ENCODE measurements at regions of chr3 and their contacts with region 1.

Region 1: DNA sequence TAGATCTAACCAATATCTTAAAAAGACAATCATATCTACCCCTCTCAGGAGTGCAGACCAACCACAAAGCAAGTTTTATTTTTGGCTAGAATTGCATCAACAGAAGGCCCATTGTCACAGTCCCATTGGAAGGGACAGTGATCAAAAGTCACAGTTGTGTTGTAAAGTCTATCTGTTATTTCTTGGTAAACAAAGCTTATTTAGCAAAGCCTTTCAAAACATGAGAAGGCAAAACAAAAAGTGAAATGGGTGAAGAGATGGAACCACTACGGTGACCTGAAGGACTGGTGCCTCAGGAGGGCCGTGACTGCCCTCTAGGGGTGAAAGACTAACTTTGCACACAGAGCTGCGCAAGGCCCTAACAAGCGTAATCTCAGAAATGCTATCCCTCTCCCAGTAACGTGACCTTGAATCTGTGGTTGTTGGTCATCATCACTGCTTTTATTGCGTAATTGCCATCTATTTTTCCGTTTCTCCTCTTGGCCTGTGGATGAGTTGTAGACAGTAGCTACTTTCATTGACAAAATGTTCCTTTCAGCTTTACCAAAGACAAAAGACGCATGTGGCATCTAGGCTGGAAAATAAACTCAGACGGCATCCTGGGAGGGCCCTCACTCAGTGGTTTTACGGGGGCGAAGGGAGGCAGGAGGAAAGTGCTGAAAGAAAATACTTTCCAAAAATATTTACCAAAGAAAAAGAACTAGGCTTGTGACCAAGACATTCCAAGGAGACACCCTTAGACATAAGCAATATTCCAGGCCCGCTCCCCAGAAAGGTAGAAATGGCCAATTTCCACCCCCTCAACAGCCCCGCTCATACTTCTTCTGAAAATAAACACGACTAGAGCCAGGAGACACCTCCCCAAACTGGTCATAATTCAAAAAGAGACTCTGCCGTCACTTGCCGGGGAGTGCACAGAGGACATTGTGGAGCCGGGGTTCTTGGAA is 79.4 kb downstream of the FRMD4B start:
- DNase-seq: peak; percentile 92
- H3K4me3 Mint-ChIP-seq: no peak overlapping the region
- H3K27ac Mint-ChIP-seq: peak overlapping the region; percentile 59
- H3K4me1 Mint-ChIP-seq: peaks cover 16% of the 10 kb centered on the region
- H3K27me3 Mint-ChIP-seq: no peaks in the 10 kb centered on the region
- CTCF ChIP-seq: peak; percentile 85

Region 2: GRCh38 chr3:68706096-68706495 is 600.4 kb before region 1 on chr3:
- CTCF ChIA-PET with region 1: no interaction called
- POLR2A ChIA-PET with region 1: no interaction called
- intact Hi-C with region 1: no loop called
- DNase-seq: no peak
- H3K4me3 Mint-ChIP-seq: no peak overlapping the region
- H3K27ac Mint-ChIP-seq: no peak overlapping the region
- H3K4me1 Mint-ChIP-seq: no peaks in the 10 kb centered on the region
- H3K27me3 Mint-ChIP-seq: no peaks in the 10 kb centered on the region
- CTCF ChIP-seq: no peak

Region 3: GRCh38 chr3:69120879-69121464 is 185.5 kb before region 1 on chr3:
- CTCF ChIA-PET with region 1: interaction called, 66 read pairs
- POLR2A ChIA-PET with region 1: no interaction called
- intact Hi-C with region 1: loop called (anchors 1 kb)
- DNase-seq: peak; percentile 87
- H3K4me3 Mint-ChIP-seq: no peak overlapping the region
- H3K27ac Mint-ChIP-seq: no peak overlapping the region
- H3K4me1 Mint-ChIP-seq: no peaks in the 10 kb centered on the region
- H3K27me3 Mint-ChIP-seq: no peaks in the 10 kb centered on the region
- CTCF ChIP-seq: peak; percentile 88

Region 4: GRCh38 chr3:69181592-69182211 is 124.8 kb before region 1 on chr3:
- CTCF ChIA-PET with region 1: interaction called, 12 read pairs
- POLR2A ChIA-PET with region 1: no interaction called
- intact Hi-C with region 1: no loop called
- DNase-seq: peak; percentile 38
- H3K4me3 Mint-ChIP-seq: no peak overlapping the region
- H3K27ac Mint-ChIP-seq: peak overlapping the region; percentile 46
- H3K4me1 Mint-ChIP-seq: peaks cover 24% of the 10 kb centered on the region
- H3K27me3 Mint-ChIP-seq: no peaks in the 10 kb centered on the region
- CTCF ChIP-seq: no peak

Region 5: GRCh38 chr3:69200384-69201068 is 106.0 kb before region 1 on chr3:
- CTCF ChIA-PET with region 1: interaction called, 25 read pairs
- POLR2A ChIA-PET with region 1: interaction called, 4 read pairs
- intact Hi-C with region 1: loop called (anchors 1 kb)
- DNase-seq: peak; percentile 92
- H3K4me3 Mint-ChIP-seq: peak overlapping the region; percentile 75
- H3K27ac Mint-ChIP-seq: peak overlapping the region; percentile 93
- H3K4me1 Mint-ChIP-seq: peaks cover 24% of the 10 kb centered on the region
- H3K27me3 Mint-ChIP-seq: no peaks in the 10 kb centered on the region
- CTCF ChIP-seq: no peak

Region 6: GRCh38 chr3:69324362-69325025 is 18.0 kb after region 1 on chr3:
- CTCF ChIA-PET with region 1: interaction called, 44 read pairs
- POLR2A ChIA-PET with region 1: interaction called, 4 read pairs
- intact Hi-C with region 1: no loop called
- DNase-seq: peak; percentile 51
- H3K4me3 Mint-ChIP-seq: no peak overlapping the region
- H3K27ac Mint-ChIP-seq: no peak overlapping the region
- H3K4me1 Mint-ChIP-seq: peaks cover 11% of the 10 kb centered on the region
- H3K27me3 Mint-ChIP-seq: no peaks in the 10 kb centered on the region
- CTCF ChIP-seq: peak; percentile 53

Region 7: DNA sequence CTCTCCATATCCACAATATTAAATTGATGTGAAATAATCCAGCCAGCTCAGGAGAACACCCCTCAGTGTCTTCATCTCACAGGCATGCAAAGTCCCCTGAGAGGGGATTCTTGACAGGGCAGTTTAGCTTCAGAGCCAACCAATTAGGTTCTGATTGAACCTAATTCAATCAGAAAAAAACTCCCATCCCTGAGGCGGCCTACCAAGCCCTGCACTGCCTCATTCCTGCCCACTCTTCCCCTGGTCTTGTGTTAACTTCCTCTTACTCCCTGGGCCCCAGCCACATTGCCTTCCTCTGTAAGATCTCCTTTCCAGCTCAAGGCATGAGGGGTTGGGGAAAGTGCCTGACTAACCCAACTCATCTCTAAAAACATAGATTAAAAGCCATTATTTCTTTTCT is 33.2 kb after region 1 on chr3:
- CTCF ChIA-PET with region 1: no interaction called
- POLR2A ChIA-PET with region 1: no interaction called
- intact Hi-C with region 1: no loop called
- DNase-seq: no peak
- H3K4me3 Mint-ChIP-seq: no peak overlapping the region
- H3K27ac Mint-ChIP-seq: no peak overlapping the region
- H3K4me1 Mint-ChIP-seq: peaks cover 6% of the 10 kb centered on the region
- H3K27me3 Mint-ChIP-seq: no peaks in the 10 kb centered on the region
- CTCF ChIP-seq: no peak

Region 8: DNA sequence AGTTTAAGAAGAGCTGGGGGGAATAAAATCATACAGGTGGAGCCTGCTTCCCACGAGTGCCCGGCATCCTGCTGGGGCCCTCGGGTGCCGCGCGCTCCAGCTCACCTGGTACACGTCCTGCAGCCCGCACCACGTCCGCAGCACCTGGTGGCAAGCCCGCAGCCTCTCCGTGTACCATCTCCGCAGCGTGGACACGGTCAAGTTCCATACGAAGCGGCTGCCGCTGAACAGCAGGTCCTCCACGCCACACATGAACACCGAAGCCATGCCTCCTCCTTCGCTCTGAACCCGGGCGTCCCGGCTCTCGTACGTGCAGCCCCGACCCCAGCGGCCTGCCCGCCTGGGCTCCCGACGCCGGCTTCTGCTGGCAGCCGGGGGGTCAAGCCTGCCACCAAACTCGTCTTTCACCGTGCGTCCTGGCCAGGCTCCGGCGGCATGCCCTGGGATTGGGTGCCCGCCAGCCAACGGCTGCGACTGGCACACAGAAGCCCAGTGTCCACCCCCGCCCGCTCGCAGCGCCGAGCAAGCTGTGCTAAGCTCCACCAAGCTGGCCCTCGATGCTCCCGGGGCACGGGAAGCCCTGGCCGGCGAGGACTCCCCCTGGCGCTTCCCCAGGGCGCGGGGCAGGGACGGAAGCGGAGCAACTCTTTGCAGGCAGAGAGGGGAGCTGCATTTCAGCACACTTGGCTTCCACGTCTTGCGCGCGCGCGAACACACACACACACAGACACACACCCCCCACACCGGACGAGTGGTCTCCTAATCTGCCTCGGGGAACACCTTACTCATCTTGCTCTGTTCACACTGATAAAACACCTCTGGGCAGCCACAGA is 79.4 kb after region 1 on chr3 and contains the start of gene FRMD4B:
- CTCF ChIA-PET with region 1: interaction called, 11 read pairs
- POLR2A ChIA-PET with region 1: interaction called, 4 read pairs
- intact Hi-C with region 1: no loop called
- DNase-seq: peak; percentile 66
- H3K4me3 Mint-ChIP-seq: peak within 1 kb of the TSS; percentile 80
- H3K27ac Mint-ChIP-seq: peak within 1 kb of the TSS; percentile 75
- H3K4me1 Mint-ChIP-seq: peaks cover 23% of the 10 kb centered on the region
- H3K27me3 Mint-ChIP-seq: no peaks in the 10 kb centered on the region
- CTCF ChIP-seq: peak; percentile 33
- total RNA-seq, gene FRMD4B: 39.0 and 51.9 TPM in 2 replicates

Region 9: GRCh38 chr3:69425261-69425660 is 118.7 kb after region 1 on chr3:
- CTCF ChIA-PET with region 1: interaction called, 19 read pairs
- POLR2A ChIA-PET with region 1: no interaction called
- intact Hi-C with region 1: loop called (anchors 1 kb)
- DNase-seq: peak; percentile 62
- H3K4me3 Mint-ChIP-seq: no peak overlapping the region
- H3K27ac Mint-ChIP-seq: no peak overlapping the region
- H3K4me1 Mint-ChIP-seq: peaks cover 18% of the 10 kb centered on the region
- H3K27me3 Mint-ChIP-seq: no peaks in the 10 kb centered on the region
- CTCF ChIP-seq: peak; percentile 74

Region 10: DNA sequence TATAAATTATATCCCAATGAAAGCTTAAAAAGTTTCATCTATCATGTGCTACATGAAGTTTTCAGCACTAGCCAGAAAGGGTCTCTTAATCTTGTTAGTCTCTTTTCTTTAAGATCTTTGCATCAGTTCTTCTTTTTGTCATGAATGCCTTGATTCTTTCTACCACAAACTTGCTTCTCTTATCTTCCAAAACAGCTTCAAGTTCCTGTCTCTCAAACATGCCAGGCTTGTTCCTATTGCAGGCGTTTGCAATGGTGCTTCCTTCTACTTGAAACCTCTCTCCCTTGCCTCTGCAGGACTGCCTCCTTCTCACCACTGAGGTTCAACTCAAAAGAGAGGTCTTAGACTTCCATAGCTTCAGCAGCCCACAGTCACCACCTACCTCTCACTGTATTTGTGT is 183.7 kb after region 1 on chr3:
- CTCF ChIA-PET with region 1: no interaction called
- POLR2A ChIA-PET with region 1: no interaction called
- intact Hi-C with region 1: no loop called
- DNase-seq: no peak
- H3K4me3 Mint-ChIP-seq: no peak overlapping the region
- H3K27ac Mint-ChIP-seq: no peak overlapping the region
- H3K4me1 Mint-ChIP-seq: peaks cover 13% of the 10 kb centered on the region
- H3K27me3 Mint-ChIP-seq: no peaks in the 10 kb centered on the region
- CTCF ChIP-seq: no peak

Measured in MCF 10A (cell line).